Activated CD4-positive, alpha-beta T cell treated with anti-CD3 and anti-CD28 coated beads, Interleukin-2, amount 10 ng/mL, durations not matched to agents 7 days and 5 days (primary cell): ENCODE measurements at regions of chr10 and their contacts with region 1.

Region 1: GRCh38 chr10:109883859-109884771 is 39.2 kb downstream of the XPNPEP1 start:
- DNase-seq: peak; percentile 71
- H3K4me3 Mint-ChIP-seq: no peak overlapping the region
- H3K27ac Mint-ChIP-seq: no peak overlapping the region
- H3K4me1 Mint-ChIP-seq: peaks cover 23% of the 10 kb centered on the region
- H3K27me3 Mint-ChIP-seq: no peaks in the 10 kb centered on the region

Region 2: DNA sequence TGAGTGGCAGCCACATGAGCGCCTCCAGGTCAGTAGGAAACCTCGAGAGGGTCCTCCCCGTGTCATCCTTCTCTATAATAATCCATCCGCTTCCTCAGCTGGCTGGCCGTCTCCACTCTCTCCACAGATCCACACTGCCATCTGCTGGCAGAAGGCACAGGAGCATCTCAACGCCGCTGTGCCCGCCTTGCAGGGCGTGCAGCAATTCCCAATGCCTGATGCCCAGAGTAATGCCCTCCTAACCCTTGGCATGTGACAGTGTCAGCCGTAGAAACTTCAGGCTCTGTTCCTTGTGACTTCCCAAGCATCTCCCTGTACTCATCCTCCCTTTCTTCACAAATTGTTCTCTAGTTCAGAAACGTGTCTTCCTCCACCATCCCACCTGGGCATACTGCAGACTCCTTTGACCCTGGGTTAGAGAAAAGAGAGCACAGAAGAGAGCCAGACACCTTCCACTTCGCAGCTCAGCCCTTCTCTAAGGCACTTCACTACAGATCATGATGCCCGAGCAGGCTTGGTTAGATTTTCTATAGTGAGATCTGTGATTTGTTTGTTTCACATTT is 31.6 kb before region 1 on chr10:
- CTCF ChIA-PET with region 1: no interaction called
- POLR2A ChIA-PET with region 1: no interaction called
- DNase-seq: peak; percentile 77
- H3K4me3 Mint-ChIP-seq: no peak overlapping the region
- H3K27ac Mint-ChIP-seq: no peak overlapping the region
- H3K4me1 Mint-ChIP-seq: peaks cover 17% of the 10 kb centered on the region
- H3K27me3 Mint-ChIP-seq: no peaks in the 10 kb centered on the region

Region 3: GRCh38 chr10:109895095-109895818 is 11.1 kb after region 1 on chr10:
- CTCF ChIA-PET with region 1: interaction called, 10 read pairs
- POLR2A ChIA-PET with region 1: no interaction called
- DNase-seq: no peak
- H3K4me3 Mint-ChIP-seq: no peak overlapping the region
- H3K27ac Mint-ChIP-seq: peak overlapping the region; percentile 4
- H3K4me1 Mint-ChIP-seq: peaks cover 59% of the 10 kb centered on the region
- H3K27me3 Mint-ChIP-seq: no peaks in the 10 kb centered on the region

Region 4: GRCh38 chr10:109902934-109903589 is 18.9 kb after region 1 on chr10:
- CTCF ChIA-PET with region 1: interaction called, 12 read pairs
- POLR2A ChIA-PET with region 1: no interaction called
- DNase-seq: peak; percentile 31
- H3K4me3 Mint-ChIP-seq: peak overlapping the region; percentile 48
- H3K27ac Mint-ChIP-seq: peak overlapping the region; percentile 95
- H3K4me1 Mint-ChIP-seq: peaks cover 66% of the 10 kb centered on the region
- H3K27me3 Mint-ChIP-seq: no peaks in the 10 kb centered on the region